Activated B cell treated with CpG ODN at 0.5 μM for 24 hours (primary cell): ENCODE measurements at regions of chr9 and their contacts with region 1.

Region 1: DNA sequence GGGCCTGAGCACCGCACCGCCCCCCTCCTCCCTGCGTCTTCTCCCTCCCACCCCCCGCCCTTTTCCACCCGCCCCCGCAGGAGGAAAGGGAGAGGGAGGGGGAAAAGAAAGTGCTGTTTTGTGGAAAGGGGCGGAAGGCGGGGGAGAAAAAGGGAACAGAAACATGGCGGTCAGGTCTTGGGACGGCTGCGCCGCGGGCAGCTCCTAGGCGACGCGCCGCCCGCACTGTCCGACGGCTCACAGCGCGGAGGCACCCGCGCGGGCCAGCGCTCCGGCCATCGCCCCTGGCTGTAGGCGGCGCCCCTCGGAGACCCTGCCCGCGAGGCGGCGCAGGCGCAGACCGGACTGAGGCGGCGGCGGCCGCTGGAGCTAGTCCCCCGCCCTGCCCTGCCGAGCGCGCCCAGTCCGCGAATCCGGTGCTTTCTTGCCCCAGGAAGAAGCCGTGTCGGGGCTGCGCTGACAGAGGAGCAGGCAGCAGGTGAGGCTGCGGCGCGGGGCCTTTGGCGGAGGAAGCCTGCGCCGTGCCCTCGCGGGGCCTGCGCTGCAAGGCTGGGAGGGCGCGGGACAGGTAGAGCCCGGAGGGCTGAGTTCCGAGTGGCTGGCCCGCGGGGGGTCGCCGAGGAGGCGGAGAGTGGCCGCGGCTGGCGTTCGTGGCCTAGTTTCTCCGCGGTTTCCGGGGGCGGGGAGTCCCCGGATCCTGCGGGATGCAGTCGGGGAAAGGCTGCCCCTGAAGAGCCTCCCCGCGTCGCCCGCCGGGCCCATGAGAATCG is at the start of gene DENND4C:
- DNase-seq: peak; percentile 76
- ATAC-seq: peak; percentile 72
- H3K4me3 Mint-ChIP-seq: no peak within 1 kb of the TSS
- H3K27ac Mint-ChIP-seq: peak within 1 kb of the TSS; percentile 81
- H3K4me1 Mint-ChIP-seq: peaks cover 10% of the 10 kb centered on the region
- H3K27me3 Mint-ChIP-seq: no peaks in the 10 kb centered on the region
- CTCF ChIP-seq: no peak
- total RNA-seq, gene DENND4C: 27.1 and 33.4 TPM in 2 replicates

Region 2: GRCh38 chr9:19102631-19103345 is 127.8 kb before region 1 on chr9 and contains the start of gene HAUS6:
- CTCF ChIA-PET with region 1: no interaction called
- POLR2A ChIA-PET with region 1: no interaction called
- intact Hi-C with region 1: loop called (anchors 1 kb)
- DNase-seq: peak; percentile 86
- ATAC-seq: peak; percentile 94
- H3K4me3 Mint-ChIP-seq: peak within 1 kb of the TSS; percentile 98
- H3K27ac Mint-ChIP-seq: peak within 1 kb of the TSS; percentile 93
- H3K4me1 Mint-ChIP-seq: peaks cover 17% of the 10 kb centered on the region
- H3K27me3 Mint-ChIP-seq: no peaks in the 10 kb centered on the region
- CTCF ChIP-seq: no peak
- total RNA-seq, gene HAUS6: 13.7 and 15.3 TPM in 2 replicates

Region 3: GRCh38 chr9:19184144-19184917 is 46.2 kb before region 1 on chr9:
- CTCF ChIA-PET with region 1: no interaction called
- POLR2A ChIA-PET with region 1: interaction called, 19 read pairs
- intact Hi-C with region 1: loop called (anchors 1 kb)
- DNase-seq: peak; percentile 26
- ATAC-seq: peak; percentile 98
- H3K4me3 Mint-ChIP-seq: peak overlapping the region; percentile 46
- H3K27ac Mint-ChIP-seq: peak overlapping the region; percentile 94
- H3K4me1 Mint-ChIP-seq: peaks cover 10% of the 10 kb centered on the region
- H3K27me3 Mint-ChIP-seq: no peaks in the 10 kb centered on the region
- CTCF ChIP-seq: no peak

Region 4: DNA sequence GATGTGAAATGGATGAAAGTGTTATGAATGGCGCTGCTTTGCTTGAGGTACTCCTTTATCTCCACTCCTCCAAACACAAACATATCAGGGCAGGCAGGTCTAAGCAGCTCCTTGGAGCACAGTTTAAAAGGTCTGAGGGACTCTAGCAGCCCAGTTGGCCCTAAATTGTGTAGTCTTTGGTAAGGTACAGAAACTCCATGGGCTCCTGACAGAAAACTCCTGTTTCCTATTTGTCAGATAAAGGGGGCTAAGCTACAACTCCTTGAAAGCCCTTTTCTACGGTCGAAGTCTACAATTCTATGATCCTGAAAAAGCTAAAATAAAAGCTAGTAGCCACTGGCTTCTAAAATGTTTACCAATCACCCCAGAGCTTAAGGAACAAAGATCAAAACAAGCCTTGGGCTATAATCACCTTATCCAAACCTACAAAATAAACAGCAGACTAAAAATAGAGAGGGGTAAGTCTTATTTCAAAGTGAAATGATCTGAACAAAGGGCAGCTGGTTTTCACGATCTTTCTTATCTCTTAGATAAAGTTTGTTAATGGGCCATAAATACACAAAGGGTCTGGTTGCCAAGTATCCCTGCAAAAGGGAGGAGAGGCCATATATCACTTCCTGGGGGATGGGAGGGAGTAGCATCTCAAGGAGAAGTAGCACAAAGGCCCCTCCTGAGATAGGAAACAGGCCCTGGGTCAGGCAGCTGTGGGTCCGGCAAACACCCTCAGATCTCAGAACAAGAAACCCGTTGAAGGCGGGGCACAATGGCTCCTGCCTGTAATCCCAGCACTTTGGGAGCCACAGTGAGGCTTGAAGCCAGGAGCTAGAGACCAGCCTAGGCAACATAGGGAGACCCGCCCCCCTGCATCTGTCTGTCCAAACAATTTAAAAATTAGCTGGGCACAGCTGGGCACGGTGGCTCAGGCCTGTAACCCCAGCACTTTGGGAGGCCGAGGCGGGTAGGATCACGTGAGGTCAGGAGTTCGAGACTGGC is 28.3 kb before region 1 on chr9:
- CTCF ChIA-PET with region 1: no interaction called
- POLR2A ChIA-PET with region 1: no interaction called
- intact Hi-C with region 1: no loop called
- DNase-seq: no peak
- ATAC-seq: no peak
- H3K4me3 Mint-ChIP-seq: no peak overlapping the region
- H3K27ac Mint-ChIP-seq: no peak overlapping the region
- H3K4me1 Mint-ChIP-seq: no peaks in the 10 kb centered on the region
- H3K27me3 Mint-ChIP-seq: no peaks in the 10 kb centered on the region
- CTCF ChIP-seq: no peak

Region 5: DNA sequence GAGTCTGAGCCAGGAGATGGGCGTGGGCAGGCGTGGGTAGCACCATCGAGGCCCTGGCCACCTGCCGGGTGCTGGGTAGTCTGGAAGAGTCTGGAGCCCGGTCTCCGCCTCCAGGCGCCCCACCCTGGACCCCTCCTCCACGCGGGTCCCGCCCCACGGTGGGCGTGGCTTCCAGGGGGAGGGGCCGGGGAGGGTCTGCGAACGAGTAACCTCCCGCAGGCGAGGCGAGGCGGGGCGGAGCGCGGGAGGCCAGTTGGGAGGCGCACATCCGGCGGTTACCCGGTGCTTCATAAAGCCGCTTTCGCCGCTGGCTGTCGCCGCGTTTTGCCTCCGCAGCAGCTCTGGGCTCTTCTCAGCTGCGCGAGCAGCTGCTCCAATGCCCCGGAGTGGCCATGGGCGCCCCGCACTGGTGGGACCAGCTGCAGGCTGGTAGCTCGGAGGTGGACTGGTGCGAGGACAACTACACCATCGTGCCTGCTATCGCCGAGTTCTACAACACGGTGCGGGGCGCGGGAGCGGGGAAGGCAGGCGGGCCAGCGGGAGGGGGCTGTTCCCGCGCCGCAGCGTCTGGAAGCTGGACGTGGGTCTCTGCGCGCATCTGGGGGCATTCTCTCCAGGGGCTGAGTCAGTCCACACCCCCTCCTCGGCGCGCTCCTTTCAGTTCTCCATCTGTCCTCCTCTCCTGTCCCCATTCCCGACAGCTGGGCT is 178.3 kb after region 1 on chr9 and contains the start of gene ACER2:
- CTCF ChIA-PET with region 1: interaction called, 3 read pairs
- POLR2A ChIA-PET with region 1: no interaction called
- intact Hi-C with region 1: loop called (anchors 1 kb)
- DNase-seq: peak; percentile 99
- ATAC-seq: peak; percentile 97
- H3K4me3 Mint-ChIP-seq: peak within 1 kb of the TSS; percentile 94
- H3K27ac Mint-ChIP-seq: peak within 1 kb of the TSS; percentile 69
- H3K4me1 Mint-ChIP-seq: peaks cover 12% of the 10 kb centered on the region
- H3K27me3 Mint-ChIP-seq: no peaks in the 10 kb centered on the region
- CTCF ChIP-seq: no peak
- total RNA-seq, gene ACER2: 1.4 and 2.0 TPM in 2 replicates

Region 6: GRCh38 chr9:19464764-19465585 is 234.4 kb after region 1 on chr9:
- CTCF ChIA-PET with region 1: interaction called, 4 read pairs
- POLR2A ChIA-PET with region 1: no interaction called
- intact Hi-C with region 1: loop called (anchors 2 kb)
- DNase-seq: peak; percentile 77
- ATAC-seq: peak; percentile 93
- H3K4me3 Mint-ChIP-seq: peak overlapping the region; percentile 88
- H3K27ac Mint-ChIP-seq: peak overlapping the region; percentile 69
- H3K4me1 Mint-ChIP-seq: peaks cover 11% of the 10 kb centered on the region
- H3K27me3 Mint-ChIP-seq: no peaks in the 10 kb centered on the region
- CTCF ChIP-seq: peak; percentile 60

Region 7: DNA sequence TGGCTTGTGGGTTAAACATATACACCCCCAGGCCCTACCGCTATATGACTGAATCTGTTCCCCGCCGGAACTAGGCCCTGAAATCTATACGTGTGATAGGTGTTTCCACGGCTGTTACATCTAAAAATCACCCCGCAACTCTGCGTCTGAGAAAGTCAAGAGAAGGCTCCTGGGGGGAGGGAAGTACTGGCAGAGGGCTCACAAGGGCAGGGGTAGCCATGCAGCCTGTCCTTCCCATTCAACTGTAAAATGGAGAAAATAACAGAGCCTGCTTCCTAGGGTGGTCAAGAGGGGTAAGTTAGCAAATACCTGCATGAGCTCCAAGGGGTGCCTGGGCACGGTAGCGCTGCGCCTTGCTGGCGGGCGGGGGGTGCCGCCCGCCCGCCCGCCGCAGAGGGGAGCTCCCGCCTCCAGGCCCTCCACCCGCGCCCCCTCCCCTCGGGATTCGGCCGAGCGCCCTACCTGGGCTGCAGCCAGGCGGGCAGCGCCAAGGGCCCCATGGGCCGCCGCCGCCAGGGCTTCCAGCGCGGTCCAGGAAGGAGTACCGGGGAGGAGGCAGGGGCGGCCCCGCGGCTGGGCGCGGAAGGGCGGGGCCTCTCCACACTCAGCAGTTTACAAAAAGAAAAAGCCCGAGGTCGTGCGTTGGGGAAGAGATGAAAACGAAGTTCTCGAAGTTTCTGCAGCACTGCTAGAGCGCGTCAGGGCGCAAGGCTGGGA is 1800.7 kb after region 1 on chr9 and contains the start of gene HACD4:
- CTCF ChIA-PET with region 1: no interaction called
- POLR2A ChIA-PET with region 1: no interaction called
- intact Hi-C with region 1: no loop called
- DNase-seq: peak; percentile 59
- ATAC-seq: peak; percentile 78
- H3K4me3 Mint-ChIP-seq: peak within 1 kb of the TSS; percentile 81
- H3K27ac Mint-ChIP-seq: peak within 1 kb of the TSS; percentile 70
- H3K4me1 Mint-ChIP-seq: peaks cover 17% of the 10 kb centered on the region
- H3K27me3 Mint-ChIP-seq: no peaks in the 10 kb centered on the region
- CTCF ChIP-seq: no peak
- total RNA-seq, gene HACD4: 3.3 and 4.1 TPM in 2 replicates